Mucosa of descending colon (tissue), 3 donors: ENCODE measurements at regions of chr3 and their contacts with region 1.

Region 1: DNA sequence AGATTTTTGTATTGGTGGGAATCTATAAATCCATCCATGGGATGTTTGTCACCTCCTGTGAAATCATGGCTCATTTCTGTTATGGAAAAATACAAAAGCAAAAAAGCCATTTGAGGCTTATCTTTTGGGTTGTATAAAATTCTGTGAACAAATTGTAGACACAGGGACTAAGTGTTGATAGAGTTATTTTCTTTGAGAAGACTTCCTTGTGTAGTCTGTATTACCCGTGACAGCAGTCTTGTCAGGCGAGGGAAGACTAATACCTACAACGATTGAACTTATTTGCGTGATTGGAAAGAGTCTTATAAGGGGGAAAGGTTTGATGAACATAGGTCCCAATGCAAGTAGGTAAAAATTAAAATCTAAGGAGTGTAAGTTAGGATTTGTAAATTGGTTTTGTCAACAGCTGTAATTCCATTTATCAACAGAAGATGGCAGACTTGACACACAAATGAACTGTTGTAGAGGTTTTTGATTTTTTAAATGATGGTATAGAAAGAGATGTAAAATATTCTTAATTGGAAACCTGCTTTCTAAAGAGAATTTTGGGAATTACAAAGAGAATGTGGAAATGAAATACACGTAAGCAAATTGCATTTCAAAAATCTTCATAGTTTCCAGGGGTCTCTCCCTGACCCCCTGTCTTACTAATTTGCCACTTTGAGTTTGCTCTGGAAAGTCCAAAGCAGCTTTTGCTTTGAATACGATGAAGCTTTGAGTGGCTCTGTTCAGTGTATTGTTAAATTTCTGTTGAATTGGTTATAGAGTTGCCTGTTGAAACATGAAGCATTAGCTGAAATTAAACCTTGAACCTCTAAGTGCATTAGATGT is 33.2 kb downstream of the SLC25A26 start:
- DNase-seq: no peak
- ATAC-seq: peak; percentile 60
- H3K4me3 ChIP-seq: no peak overlapping the region
- H3K4me1 ChIP-seq: no peaks in the 10 kb centered on the region
- CTCF ChIP-seq: peak; percentile 46

Region 2: DNA sequence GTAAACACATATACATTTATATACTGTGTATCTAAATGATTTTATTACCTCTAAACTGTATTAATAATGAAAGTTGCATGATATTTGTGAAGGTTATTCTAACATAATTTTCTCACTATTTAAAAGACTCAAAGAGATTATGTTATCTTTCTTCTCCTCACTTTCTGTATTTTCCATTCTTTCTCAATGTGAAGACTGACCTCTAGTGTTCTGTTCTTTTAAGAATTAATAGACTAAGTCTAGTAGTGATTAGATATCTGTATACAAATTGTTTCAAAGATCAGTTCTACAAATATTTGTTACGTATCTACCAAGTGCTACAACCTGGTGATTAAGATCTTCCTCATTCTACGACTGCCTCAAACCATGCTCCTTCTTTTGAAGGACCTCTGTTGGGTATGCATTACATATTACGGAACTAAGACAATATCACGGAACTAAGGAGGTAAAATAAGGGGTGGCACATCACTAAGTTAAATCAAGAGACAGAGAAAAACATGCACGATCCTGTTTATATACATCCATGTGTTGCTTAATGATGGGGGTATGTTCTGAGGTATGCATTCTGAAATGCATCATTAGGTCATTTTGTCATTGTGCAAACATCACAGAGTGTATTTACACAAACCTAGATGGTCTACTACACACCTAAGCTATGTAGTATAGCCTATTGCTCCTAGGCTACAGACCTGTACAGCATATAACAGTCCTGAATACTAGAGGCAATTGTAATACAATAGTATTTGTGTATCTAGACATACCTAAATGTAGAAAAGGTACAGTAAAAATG is 582.6 kb after region 1 on chr3:
- intact Hi-C with region 1: loop called in 1 of 2 experiments (anchors 10 kb)
- DNase-seq: no peak
- ATAC-seq: peak; percentile 32
- H3K4me3 ChIP-seq: no peak overlapping the region
- H3K4me1 ChIP-seq: peaks cover under 1% of the 10 kb centered on the region
- CTCF ChIP-seq: no peak